ENCODE measurements at regions of chrX and their contacts with region 1.

Region 1: GRCh38 chrX:72238721-72239475 is at the start of gene ERCC6L:
- DNase-seq: peak; percentile 74 to 88
- H3K4me3 ChIP-seq: peak within 1 kb of the TSS; percentile 73
- H3K27ac ChIP-seq: no peak within 1 kb of the TSS
- H3K4me1 ChIP-seq: 0 out of 2 replicates have a peak, but pooled peaks cover 7% of the 10 kb centered on the region
- H3K27me3 ChIP-seq: no peaks in the 10 kb centered on the region
- CTCF ChIP-seq: no peak
- total RNA-seq, gene ERCC6L: 6.5 and 10.0 TPM in 2 replicates

Region 2: DNA sequence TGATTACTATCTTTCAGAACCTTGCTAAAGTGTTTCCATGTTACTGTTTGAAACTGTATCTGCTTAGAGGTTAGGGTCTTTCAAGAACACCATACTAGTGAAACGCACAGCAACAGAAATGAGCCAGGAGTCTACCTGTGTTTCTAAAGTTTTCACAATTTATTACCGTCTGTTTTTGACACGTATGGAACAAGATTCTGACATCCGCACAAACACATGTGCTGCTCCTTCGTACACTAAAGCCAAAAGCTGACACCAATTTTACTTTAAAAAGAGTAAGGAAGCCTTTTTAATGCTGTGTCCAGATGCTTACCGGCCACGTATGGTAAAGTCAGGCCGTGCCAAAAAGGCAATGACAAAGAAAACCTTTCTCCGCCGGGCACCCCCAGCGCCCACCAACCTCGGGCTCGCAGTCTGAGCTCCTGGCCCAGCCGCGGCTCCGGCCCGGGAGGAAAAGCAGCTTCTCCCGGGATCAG is 37.6 kb after region 1 on chrX:
- CTCF ChIA-PET with region 1: no interaction called
- POLR2A ChIA-PET with region 1: interaction called, 30 read pairs
- intact Hi-C with region 1: no loop called
- DNase-seq: no peak
- H3K4me3 ChIP-seq: peak overlapping the region; percentile 98
- H3K27ac ChIP-seq: peak overlapping the region; percentile 86
- H3K4me1 ChIP-seq: peaks cover 42% of the 10 kb centered on the region
- H3K27me3 ChIP-seq: no peaks in the 10 kb centered on the region
- CTCF ChIP-seq: no peak

Region 3: DNA sequence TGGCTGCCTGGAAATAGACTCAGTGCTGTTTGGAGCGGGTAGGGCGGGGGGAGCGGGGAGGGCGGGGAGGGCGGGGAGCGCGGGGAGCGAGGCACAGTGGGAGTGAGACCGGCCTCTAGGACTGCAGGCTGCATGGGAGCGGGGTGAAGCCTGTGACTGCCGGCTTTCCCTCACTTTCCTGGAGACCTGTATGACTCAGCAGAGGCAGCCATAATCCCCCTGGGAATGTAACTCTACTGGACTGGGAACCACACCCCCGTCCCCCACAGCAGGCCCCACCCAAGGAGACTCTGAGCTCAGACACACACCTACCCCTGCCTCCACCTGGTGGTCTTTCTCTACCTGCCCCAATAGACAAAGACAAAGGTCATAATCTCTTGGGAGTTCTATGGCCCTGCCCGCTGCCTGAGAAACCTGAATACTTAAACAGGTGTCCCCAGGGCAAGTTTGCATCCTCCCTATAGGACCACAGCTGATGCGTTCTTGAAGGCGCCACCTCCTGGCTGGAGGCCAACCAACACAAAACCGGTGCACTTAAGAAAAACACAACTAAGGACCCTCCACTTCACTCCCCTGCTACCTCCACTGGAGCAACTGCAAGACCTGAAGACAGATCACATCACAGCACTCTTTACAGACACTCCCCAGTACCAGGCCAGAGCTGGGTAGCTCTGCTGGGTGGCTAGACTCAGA is 315.7 kb after region 1 on chrX:
- CTCF ChIA-PET with region 1: no interaction called
- POLR2A ChIA-PET with region 1: interaction called, 17 read pairs
- intact Hi-C with region 1: no loop called
- DNase-seq: peak; percentile 76 to 81
- H3K4me3 ChIP-seq: peak overlapping the region; percentile 45; the same call in 1 of the 2 replicates
- H3K27ac ChIP-seq: peak overlapping the region; percentile 90
- H3K4me1 ChIP-seq: peaks cover 17% of the 10 kb centered on the region
- H3K27me3 ChIP-seq: no peaks in the 10 kb centered on the region
- CTCF ChIP-seq: peak; percentile 59